Common myeloid progenitor, CD34-positive (primary cell): ENCODE measurements at regions of chr3 and their contacts with region 1.

Region 1: GRCh38 chr3:38479431-38480092 is 16.6 kb upstream of the EXOG start:
- DNase-seq: peak; percentile 34 to 72 (median 55)
- H3K4me3 ChIP-seq: no peak overlapping the region
- H3K27ac ChIP-seq: no peak overlapping the region
- H3K4me1 ChIP-seq: peaks cover 0 to 12% (median 6%) of the 10 kb centered on the region in 4 experiments
- H3K27me3 ChIP-seq: no peaks in the 10 kb centered on the region

Region 2: DNA sequence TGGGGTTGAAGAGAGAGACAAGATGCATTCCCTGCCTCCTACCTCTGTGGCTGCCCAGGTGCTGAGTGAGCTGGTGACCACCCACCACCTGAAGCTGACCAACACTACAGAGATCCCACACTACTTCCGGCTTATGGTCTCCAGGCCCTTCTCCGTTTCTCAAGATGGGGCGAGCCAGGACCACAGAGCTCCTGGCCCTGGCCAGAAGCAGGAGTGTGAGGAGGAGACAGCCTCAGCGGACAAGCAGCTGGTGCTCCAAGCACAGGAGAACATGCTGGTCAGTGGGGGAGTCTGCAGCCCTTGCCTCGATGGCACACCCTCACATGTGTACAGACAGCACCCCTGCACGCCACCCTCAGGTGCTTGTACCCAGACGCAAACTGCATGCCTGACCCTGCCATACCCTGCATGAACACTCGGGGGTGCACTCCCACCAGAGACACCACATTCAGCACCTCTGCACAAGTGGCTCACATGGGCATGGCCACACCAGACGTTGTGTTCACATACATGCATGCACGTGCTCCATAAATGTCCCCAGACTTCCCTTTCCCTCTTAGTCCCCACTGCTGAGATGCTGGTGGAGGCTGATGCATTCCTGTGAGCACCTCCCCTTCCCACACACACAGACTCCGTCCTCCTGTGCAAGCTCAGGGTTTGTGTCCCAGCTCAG is 361.7 kb before region 1 on chr3:
- CTCF ChIA-PET with region 1: interaction called, 14 read pairs
- POLR2A ChIA-PET with region 1: no interaction called
- DNase-seq: peak; percentile 69 to 85 (median 84)
- H3K4me3 ChIP-seq: no peak overlapping the region
- H3K27ac ChIP-seq: no peak overlapping the region
- H3K4me1 ChIP-seq: peaks cover 0 to 11% (median 5%) of the 10 kb centered on the region in 4 experiments
- H3K27me3 ChIP-seq: no peaks in the 10 kb centered on the region

Region 3: DNA sequence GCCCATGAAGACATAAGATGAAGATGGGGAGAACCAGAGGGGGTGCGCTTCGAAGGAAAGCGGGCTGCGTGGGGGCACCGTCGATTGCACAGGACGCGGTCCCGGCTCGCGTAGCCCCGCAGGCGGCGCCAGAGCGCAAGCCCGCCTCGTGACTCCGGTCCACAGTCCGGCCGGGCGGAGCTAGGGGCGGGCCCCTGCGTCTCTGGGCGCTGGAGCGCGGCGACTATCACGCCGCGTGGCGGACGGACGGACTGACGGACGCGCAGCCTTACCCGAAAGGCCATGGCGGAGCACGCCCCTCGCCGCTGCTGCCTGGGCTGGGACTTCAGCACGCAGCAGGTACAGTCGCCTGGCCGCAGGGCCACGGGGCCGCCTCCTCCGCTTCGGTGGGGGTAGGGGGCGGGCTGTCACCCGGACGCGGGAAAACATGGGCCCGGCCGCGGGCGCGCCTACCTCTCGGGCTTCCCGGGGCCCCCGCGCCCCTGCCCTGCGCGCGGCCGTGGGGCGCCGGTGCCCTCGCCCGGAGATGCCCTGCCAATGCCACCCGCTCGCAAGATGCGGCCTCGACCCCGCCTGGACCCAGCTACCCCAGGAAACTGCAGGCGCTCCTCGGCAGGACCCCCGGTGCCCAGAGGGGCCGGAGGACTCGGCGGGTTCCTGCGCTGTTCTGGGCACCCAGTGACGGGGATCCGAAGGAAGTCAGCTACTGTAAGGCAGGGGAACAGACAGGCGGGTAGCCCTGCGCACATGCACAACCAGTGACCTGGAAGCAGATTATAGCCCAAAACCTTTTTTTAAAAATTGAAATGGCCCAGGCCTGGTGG is 132.8 kb before region 1 on chr3 and contains the start of gene XYLB:
- CTCF ChIA-PET with region 1: interaction called, 98 read pairs
- POLR2A ChIA-PET with region 1: no interaction called
- DNase-seq: peak; percentile 73 to 81 (median 80)
- H3K4me3 ChIP-seq: peak within 1 kb of the TSS; percentile 28 to 86 (median 75)
- H3K27ac ChIP-seq: peak within 1 kb of the TSS in 1 of 2 experiments; percentile 25
- H3K4me1 ChIP-seq: peaks cover 0 to 14% (median 9%) of the 10 kb centered on the region in 4 experiments
- H3K27me3 ChIP-seq: no peaks in the 10 kb centered on the region

Region 4: DNA sequence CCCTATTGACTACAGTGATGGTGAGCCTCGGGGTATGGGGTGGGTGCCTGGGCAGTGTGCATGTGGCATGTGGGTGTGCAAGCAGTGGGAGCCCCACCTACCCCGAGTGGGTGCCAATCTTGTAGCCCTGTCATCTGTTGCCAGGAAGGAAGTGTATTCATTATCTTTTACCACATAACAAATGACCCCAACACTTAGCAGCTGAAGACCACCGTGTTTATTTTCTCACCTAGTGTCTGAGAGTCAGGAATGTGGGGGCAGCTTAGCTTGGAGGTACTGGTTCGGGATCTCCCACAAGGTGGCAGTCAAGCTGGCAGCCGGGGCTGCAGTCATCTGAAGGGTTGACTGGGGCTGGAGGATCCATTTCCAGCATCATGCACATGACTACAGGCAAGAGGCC is 111.3 kb before region 1 on chr3:
- CTCF ChIA-PET with region 1: interaction called, 17 read pairs
- POLR2A ChIA-PET with region 1: no interaction called
- DNase-seq: no peak
- H3K4me3 ChIP-seq: no peak overlapping the region
- H3K27ac ChIP-seq: no peak overlapping the region
- H3K4me1 ChIP-seq: peaks cover 0 to under 1% (median 0%) of the 10 kb centered on the region in 4 experiments
- H3K27me3 ChIP-seq: no peaks in the 10 kb centered on the region

Region 5: DNA sequence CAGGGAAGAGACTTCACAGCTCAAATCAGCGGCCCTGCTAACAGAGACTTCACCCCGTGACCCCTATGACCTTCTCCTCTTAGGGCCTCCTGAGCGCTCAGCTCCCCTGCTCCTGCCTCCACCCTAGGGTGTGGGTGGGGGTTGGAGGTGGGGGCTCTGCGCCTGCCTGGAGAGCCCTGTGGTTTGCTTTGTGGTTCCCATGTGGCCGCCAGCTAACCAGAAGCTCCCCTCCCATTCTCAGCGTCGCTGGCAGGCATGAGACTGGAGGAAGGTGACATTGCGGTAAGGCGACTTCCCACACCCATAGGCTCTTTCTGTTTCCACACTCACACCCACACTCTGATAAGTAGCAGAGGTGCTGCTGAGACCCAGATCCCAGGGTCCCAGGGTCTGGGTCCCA is 105.3 kb before region 1 on chr3:
- CTCF ChIA-PET with region 1: interaction called, 17 read pairs
- POLR2A ChIA-PET with region 1: no interaction called
- DNase-seq: peak; percentile 34 to 62 (median 60)
- H3K4me3 ChIP-seq: no peak overlapping the region
- H3K27ac ChIP-seq: no peak overlapping the region
- H3K4me1 ChIP-seq: peaks cover 4 to 14% (median 11%) of the 10 kb centered on the region in 4 experiments
- H3K27me3 ChIP-seq: no peaks in the 10 kb centered on the region

Region 6: GRCh38 chr3:38446085-38446686 is 33.4 kb before region 1 on chr3:
- CTCF ChIA-PET with region 1: no interaction called
- POLR2A ChIA-PET with region 1: no interaction called
- DNase-seq: no peak
- H3K4me3 ChIP-seq: no peak overlapping the region
- H3K27ac ChIP-seq: no peak overlapping the region
- H3K4me1 ChIP-seq: no peaks in the 10 kb centered on the region
- H3K27me3 ChIP-seq: peaks cover 0 to 16% (median 5%) of the 10 kb centered on the region in 5 experiments

Region 7: GRCh38 chr3:38490281-38491030 is 10.9 kb after region 1 on chr3:
- CTCF ChIA-PET with region 1: interaction called, 13 read pairs
- POLR2A ChIA-PET with region 1: interaction called, 3 read pairs
- DNase-seq: no peak
- H3K4me3 ChIP-seq: no peak overlapping the region
- H3K27ac ChIP-seq: no peak overlapping the region
- H3K4me1 ChIP-seq: no peaks in the 10 kb centered on the region
- H3K27me3 ChIP-seq: no peaks in the 10 kb centered on the region